Heart right ventricle (tissue), 16 donors: ENCODE measurements at regions of chr14 and their contacts with region 1.

Region 1: DNA sequence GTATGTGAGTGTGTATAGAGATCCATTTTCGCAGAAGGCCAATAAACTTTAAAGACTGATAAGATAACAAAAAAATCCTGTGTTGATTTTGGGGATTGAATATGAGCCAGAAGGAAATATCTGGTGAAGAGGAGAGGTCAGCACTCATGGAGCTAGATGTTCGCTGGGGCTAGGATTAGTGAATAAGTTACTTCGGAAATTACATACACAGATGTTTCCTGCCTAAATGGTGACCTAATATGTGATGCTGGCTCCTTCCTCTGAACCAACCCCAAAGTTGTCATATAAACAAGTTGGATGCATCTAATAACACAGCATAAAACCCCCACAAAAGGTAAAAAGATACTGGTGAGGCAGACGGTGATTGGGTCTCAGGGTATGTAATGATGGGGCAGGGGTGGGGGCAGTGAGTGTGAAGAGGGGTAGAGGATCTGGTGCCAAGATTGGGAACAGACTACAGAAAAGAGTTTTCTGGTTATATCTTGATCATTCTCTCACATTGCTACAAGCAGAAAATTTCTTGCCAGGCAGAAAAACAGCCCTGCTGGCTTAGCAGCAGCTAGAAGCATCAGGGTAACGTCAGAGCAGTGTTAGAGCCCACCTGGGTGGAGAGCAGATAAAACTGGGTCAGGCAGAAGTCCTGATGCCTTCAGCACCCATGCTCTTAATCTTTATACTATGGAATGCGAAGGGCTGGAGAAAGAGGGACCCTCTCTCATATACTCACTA is 140.4 kb upstream of the GZMB start:
- DNase-seq: peak in 1 of 2 donors; percentile 29
- ATAC-seq: peak; percentile 50 to 99 (median 94)
- H3K4me3 ChIP-seq: no peak overlapping the region
- H3K27ac ChIP-seq: peak overlapping the region in 9 of 10 donors; percentile 21 to 84 (median 74)
- H3K4me1 ChIP-seq: peaks cover 0 to 30% (median 11%) of the 10 kb centered on the region in 9 donors
- H3K27me3 ChIP-seq: no peaks in the 10 kb centered on the region
- CTCF ChIP-seq: no peak

Region 2: DNA sequence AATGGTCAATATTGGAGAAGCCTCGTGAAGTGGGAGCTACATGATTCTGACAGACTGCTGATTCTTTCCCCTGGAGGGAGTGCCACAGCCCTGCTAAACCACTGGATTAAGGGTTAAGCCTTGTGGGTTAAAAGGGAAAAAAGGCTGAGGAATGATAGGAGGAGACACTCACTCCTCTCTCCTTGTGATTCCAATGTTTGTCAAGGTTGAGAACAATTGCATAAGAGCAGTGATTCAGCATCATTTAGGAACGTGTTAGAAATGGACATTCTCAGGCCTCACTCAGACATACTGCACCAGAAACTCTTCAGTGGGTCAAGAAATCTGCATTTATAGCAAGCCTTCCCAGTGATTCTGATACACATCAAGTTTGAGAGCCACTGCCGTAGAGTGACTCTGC is 52.6 kb before region 1 on chr14:
- intact Hi-C with region 1: loop called in 1 of 10 experiments (anchors 2 kb)
- DNase-seq: no peak
- ATAC-seq: no peak
- H3K4me3 ChIP-seq: no peak overlapping the region
- H3K27ac ChIP-seq: no peak overlapping the region
- H3K4me1 ChIP-seq: no peaks in the 10 kb centered on the region
- H3K27me3 ChIP-seq: peaks cover 0 to 21% (median 6%) of the 10 kb centered on the region in 7 donors
- CTCF ChIP-seq: no peak